Aorta (tissue), 5 donors: ENCODE measurements at regions of chr19 and their contacts with region 1.

Region 1: DNA sequence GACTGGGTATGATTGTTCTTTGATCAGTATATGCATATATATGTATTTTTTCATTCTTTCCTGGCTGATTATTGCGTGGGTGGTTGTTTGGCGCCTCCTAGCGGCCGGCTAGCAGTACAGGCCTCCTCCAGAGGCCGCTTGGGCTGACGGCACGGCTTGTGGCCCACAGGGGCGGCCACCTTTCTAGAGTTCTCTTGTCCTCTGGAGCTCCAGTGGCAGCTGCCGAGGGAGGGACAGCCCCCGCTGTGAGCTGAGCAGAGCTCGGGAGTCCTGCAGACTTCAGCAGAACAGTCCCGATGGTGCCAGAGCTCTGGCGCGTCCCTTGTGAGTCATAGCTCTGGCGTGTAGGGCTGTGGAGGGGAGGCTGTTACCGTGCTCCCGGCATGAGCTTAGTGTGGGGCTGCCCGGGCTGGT is 22.5 kb upstream of the ZNF429 start:
- DNase-seq: peak; percentile 87 to 89
- ATAC-seq: peak; percentile 94
- H3K4me3 ChIP-seq: no peak overlapping the region
- H3K27ac ChIP-seq: no peak overlapping the region
- H3K4me1 ChIP-seq: no peaks in the 10 kb centered on the region
- H3K27me3 ChIP-seq: no peaks in the 10 kb centered on the region

Region 2: DNA sequence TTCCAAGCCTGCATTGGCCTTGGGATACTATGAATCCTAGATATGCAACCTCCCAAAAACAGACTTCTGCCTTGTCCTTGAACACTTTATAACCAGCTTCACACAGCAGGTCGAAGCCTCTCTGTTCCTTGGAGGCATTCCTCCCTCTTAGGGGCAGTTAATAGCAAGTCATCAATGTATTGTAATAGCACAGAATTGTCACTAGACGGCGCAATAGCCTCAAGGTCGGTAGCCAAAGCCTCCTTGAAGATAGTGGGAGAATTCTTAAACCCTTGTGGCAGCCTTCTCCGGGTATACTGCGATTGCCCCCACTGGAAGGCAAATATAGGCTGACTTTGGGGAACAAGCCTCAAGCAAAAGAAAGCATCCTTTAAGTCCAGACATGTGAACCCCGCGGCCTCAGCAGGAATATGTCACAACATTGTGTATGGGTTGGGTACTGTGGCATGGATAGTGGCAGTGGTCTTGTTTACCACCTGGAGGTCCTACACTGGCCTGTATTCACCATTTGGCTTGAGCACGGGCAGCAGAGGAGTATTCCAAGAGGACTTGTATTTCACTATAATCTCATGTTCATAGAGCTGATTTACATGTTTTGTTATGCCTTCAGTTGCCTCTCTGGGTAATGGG is 279.9 kb before region 1 on chr19:
- intact Hi-C with region 1: loop called in 1 of 2 experiments (anchors 10 kb)
- DNase-seq: no peak
- ATAC-seq: no peak
- H3K4me3 ChIP-seq: no peak overlapping the region
- H3K27ac ChIP-seq: no peak overlapping the region
- H3K4me1 ChIP-seq: no peaks in the 10 kb centered on the region
- H3K27me3 ChIP-seq: no peaks in the 10 kb centered on the region

Region 3: DNA sequence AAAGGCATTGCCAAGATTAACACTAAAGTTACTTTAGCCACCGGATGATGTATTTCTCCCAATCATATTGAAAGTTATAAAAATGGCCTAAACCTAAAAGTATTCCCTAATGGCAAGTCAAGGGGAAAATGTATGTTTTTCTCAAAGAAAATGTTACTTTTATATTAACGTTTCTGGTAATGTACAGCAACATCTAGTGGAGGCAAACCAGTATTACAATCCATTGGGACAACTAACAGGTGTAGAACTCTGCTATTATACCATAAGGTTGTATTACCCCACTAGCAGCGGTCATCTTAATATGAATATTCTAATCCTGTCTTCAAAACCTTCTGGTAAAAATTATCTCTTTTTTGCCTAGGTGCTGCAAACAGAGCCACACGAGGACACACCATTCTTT is 215.3 kb after region 1 on chr19:
- intact Hi-C with region 1: loop called in 1 of 2 experiments (anchors 10 kb)
- DNase-seq: no peak
- ATAC-seq: no peak
- H3K4me3 ChIP-seq: no peak overlapping the region
- H3K27ac ChIP-seq: no peak overlapping the region
- H3K4me1 ChIP-seq: no peaks in the 10 kb centered on the region
- H3K27me3 ChIP-seq: no peaks in the 10 kb centered on the region